SK-N-SH (cell line): ENCODE measurements at regions of chr14 and their contacts with region 1.

Region 1: GRCh38 chr14:104094709-104095438 is 9.4 kb downstream of the ASPG start:
- DNase-seq: peak; percentile 92
- H3K4me3 ChIP-seq: no peak overlapping the region; a peak in 1 of 4 replicates
- H3K27ac ChIP-seq: no peak overlapping the region; a peak in 1 of 4 replicates
- H3K4me1 ChIP-seq: peaks cover 0 to 13% of the 10 kb centered on the region in 2 experiments; a peak in 1 of 4 replicates
- H3K27me3 ChIP-seq: no peaks in the 10 kb centered on the region
- CTCF ChIP-seq: peak; percentile 82
- EP300 ChIP-seq: no peak
- RAD21 ChIP-seq: peak; percentile 69

Region 2: DNA sequence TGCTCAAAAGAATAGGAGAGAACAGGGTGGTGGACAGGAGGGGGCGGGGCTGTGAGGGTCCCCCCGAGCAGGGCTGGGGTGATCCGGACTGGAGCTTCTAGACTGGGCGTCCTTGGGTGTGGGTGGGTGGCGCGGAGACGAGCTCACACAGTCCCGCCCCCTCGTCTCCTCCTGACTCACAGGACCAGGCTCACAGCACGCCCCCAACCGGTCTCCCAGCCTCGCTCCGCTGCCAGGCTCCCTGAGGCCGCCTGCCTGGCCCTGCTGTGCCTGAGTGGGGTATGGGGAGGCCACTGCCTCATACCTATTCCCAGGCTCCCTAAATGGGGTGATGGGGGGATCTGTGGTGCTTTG is 13.3 kb after region 1 on chr14:
- CTCF ChIA-PET with region 1: interaction called, 36 read pairs
- POLR2A ChIA-PET with region 1: no interaction called
- DNase-seq: peak; percentile 54
- H3K4me3 ChIP-seq: no peak overlapping the region
- H3K27ac ChIP-seq: no peak overlapping the region
- H3K4me1 ChIP-seq: peaks cover 0 to 21% of the 10 kb centered on the region in 2 experiments; a peak in 1 of 4 replicates
- H3K27me3 ChIP-seq: no peaks in the 10 kb centered on the region
- CTCF ChIP-seq: no peak
- EP300 ChIP-seq: no peak
- RAD21 ChIP-seq: no peak

Region 3: DNA sequence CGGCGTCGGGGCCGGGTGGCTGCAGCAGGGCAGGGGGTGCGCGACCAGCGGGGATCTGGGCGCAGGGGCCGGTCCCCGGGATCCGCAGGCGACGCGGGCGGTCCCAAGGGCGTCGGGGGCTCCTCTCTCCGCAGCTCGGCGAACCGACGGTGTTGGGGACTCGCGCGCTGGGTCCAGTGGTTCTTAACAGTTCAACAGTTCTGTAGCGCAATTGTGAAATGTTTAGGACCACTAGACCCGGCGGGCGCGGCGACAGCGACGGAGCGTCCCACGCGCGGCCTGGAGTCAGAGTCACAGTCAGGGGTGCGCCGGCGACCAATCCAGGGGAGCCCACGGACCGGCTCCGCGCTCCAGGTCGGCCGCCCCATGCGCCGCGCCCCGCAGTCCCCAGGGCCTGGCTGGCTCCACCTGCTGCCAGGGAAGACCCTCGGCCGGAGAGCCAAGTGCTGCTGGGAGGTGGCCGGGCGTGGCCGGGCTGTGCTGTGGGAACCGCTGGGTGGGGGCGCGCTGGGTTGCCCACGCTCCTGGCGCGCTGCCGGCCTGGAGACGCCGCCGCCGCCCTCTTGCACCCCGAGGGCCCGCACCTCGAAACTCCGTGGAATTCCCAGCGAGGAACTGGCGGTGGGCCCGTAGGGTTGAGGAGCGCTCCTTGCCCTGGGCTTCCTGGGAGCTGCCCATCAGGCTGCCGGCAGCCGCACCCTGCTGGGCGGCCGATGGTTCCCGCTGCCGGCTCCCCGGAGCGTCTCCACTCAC is 22.6 kb after region 1 on chr14:
- CTCF ChIA-PET with region 1: interaction called, 30 read pairs
- POLR2A ChIA-PET with region 1: no interaction called
- DNase-seq: peak; percentile 15
- H3K4me3 ChIP-seq: no peak overlapping the region
- H3K27ac ChIP-seq: no peak overlapping the region
- H3K4me1 ChIP-seq: no peaks in the 10 kb centered on the region
- H3K27me3 ChIP-seq: no peaks in the 10 kb centered on the region
- CTCF ChIP-seq: no peak
- EP300 ChIP-seq: no peak
- RAD21 ChIP-seq: no peak

Region 4: DNA sequence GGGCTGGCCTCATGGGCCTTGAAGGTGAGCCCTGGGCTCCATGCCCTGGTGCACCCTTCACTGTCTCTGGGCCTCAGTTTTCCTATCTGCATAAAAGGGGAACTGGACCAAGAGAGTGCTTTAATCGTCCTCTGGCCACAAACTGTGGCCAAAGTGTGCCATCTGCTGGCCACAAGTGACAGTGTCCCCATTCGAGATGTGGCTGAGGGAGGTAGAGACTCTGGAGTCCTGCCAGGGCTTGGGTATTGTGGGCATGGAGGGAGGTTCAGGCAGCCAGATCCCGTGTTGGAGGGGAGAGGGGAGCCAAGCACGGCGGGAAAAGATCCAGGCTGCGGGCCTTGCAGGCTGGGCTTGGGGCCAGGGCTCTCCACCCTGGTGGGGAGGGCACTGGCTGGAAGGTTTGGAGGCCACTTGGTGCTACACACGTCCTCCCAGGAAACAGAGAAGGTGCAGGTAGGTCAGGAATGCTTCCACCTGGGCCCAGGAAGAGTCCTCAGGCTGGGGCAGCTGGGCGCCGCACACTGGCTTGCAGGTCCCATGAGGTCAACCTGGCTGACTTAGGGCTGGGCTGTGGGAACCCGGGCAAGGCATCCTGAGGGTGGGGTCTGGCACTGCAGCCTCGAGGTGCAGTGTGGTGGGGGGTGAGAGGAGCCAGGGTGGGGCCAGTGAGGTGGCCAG is 36.2 kb after region 1 on chr14:
- CTCF ChIA-PET with region 1: interaction called, 79 read pairs
- POLR2A ChIA-PET with region 1: no interaction called
- DNase-seq: peak; percentile 87
- H3K4me3 ChIP-seq: peak overlapping the region in 1 of 2 experiments; percentile 44; a peak in 1 of 4 replicates
- H3K27ac ChIP-seq: no peak overlapping the region
- H3K4me1 ChIP-seq: peaks cover 0 to 19% of the 10 kb centered on the region in 2 experiments; a peak in 1 of 4 replicates
- H3K27me3 ChIP-seq: peaks cover 9% of the 10 kb centered on the region
- CTCF ChIP-seq: peak; percentile 51
- EP300 ChIP-seq: no peak
- RAD21 ChIP-seq: peak; percentile 97

Region 5: GRCh38 chr14:104144911-104145745 is 50.3 kb after region 1 on chr14:
- CTCF ChIA-PET with region 1: interaction called, 16 read pairs
- POLR2A ChIA-PET with region 1: no interaction called
- DNase-seq: peak; percentile 80
- H3K4me3 ChIP-seq: no peak overlapping the region
- H3K27ac ChIP-seq: peak overlapping the region in 1 of 2 experiments; percentile 99; a peak in 1 of 4 replicates
- H3K4me1 ChIP-seq: peaks cover 10 to 97% of the 10 kb centered on the region in 2 experiments; a peak in 2 of 4 replicates
- H3K27me3 ChIP-seq: no peaks in the 10 kb centered on the region
- CTCF ChIP-seq: no peak
- EP300 ChIP-seq: no peak
- RAD21 ChIP-seq: no peak

Region 6: DNA sequence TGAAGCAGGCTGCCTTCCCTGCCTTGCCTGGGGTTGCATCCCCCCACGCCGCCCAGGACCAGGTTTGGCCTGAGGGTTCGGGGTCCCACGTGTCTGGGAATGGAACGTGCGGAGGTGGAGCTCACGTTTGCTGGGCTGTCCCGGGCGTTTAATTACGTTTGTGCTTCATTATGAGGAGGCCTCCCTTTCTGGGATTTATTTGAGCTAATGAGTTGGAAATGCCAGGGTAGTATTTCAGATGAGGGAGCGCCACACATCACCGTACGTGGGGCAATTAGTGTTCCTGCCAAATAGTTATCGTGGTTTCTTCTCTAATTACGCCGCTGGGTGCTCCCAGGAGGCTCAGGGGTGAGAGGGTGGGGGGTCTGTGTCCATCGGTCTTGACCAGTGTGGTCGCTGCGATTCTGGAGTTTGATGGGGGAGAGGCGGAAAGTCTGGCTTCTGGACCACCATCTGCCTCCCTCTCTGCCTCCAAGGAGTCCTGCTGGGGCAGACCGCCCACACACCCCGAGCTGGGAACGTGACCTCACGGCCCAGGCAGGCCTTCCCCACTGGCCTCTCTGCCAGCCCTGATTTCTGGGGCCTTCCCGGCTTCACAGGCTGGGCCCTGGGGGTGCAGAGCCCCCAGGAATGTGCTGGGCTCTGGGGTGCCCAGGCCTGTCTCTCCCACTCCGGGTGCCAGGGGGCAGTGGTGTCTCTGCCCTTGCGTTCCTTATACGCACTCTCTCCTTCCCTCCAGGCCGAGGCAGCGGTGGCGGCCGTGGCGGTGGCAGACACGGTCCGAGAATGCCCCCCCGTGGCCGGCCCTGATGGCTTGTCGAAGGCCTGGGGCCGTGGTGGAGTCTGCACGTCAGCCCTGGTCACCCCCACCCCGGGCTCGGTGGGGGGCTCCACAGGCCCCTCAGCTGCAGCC is 62.4 kb after region 1 on chr14:
- CTCF ChIA-PET with region 1: no interaction called
- POLR2A ChIA-PET with region 1: no interaction called
- DNase-seq: peak; percentile 81
- H3K4me3 ChIP-seq: no peak overlapping the region
- H3K27ac ChIP-seq: peak overlapping the region in 1 of 2 experiments; percentile 96; a peak in 2 of 4 replicates
- H3K4me1 ChIP-seq: peaks cover 0 to 92% of the 10 kb centered on the region in 2 experiments; a peak in 1 of 4 replicates
- H3K27me3 ChIP-seq: no peaks in the 10 kb centered on the region
- CTCF ChIP-seq: peak; percentile 16
- EP300 ChIP-seq: no peak
- RAD21 ChIP-seq: peak; percentile 50